ENCODE measurements at regions of chr12 and their contacts with region 1.

Region 1: DNA sequence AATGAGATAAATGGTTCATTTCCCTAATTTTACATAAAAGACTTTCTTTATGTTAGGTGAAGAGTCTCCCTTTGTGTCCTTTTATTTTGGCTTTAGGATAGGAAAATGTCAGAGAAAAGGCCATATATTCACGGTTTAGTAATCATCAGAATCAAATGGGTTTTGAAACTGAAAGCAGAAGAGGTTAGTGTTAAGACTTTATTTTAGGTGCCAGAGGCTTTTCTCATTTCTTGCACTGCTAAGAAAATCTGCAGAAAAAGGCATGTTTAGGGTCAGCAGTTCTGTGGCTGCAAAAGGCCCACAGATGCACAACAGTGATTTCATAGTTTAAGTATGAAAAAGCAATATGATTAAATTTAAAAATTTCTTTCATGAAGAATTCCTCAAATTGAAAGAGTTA is 80.4 kb upstream of the SINHCAF start:
- DNase-seq: no peak
- H3K4me3 Mint-ChIP-seq: no peak overlapping the region
- H3K27ac Mint-ChIP-seq: no peak overlapping the region
- H3K4me1 Mint-ChIP-seq: peaks cover 5% of the 10 kb centered on the region
- H3K27me3 Mint-ChIP-seq: peaks cover 2% of the 10 kb centered on the region

Region 2: DNA sequence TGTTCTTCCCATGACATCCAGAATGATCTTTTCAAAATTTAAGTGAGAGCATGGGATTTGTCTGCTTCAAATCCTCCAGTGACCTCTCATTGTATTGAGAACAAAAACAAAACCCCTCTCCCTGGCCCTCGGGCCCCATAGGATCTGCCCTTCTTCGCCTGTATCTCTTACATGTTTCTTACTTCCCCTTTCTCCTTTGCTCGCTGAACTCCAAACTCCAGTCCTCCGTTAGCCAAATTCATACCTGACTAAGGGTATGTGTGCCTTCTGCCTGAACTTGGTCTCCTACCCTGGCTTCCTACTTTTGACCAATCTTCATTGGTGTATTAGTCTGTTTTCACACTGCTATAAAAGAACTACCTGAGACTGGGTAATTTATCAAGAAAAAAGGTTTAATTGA is 493.0 kb before region 1 on chr12:
- CTCF ChIA-PET with region 1: no interaction called
- POLR2A ChIA-PET with region 1: no interaction called
- DNase-seq: no peak
- H3K4me3 Mint-ChIP-seq: no peak overlapping the region
- H3K27ac Mint-ChIP-seq: no peak overlapping the region
- H3K4me1 Mint-ChIP-seq: no peaks in the 10 kb centered on the region
- H3K27me3 Mint-ChIP-seq: peaks cover 4% of the 10 kb centered on the region

Region 3: DNA sequence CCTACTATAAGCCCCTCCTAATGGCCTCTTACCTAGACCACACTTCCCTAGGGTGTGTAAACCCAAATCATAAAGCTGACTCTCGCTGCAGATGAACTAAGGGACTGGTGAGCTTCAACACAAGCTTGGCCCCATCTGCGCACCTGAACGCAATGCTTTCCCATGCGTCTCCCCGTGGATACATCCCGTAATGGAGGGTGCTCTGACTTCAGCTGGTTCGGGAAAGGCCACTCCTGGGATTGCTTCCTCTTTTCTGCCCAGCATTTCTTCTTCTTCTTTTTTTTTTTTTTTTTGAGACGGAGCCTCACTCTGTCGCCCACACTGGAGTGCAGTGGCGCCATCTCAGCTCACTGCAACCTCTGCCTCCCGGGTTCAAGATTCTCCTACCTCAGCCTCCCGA is 225.4 kb after region 1 on chr12:
- CTCF ChIA-PET with region 1: interaction called, 22 read pairs
- POLR2A ChIA-PET with region 1: no interaction called
- DNase-seq: no peak
- H3K4me3 Mint-ChIP-seq: no peak overlapping the region
- H3K27ac Mint-ChIP-seq: no peak overlapping the region
- H3K4me1 Mint-ChIP-seq: peaks cover 4% of the 10 kb centered on the region
- H3K27me3 Mint-ChIP-seq: peaks cover 1% of the 10 kb centered on the region

Region 4: GRCh38 chr12:31644536-31644935 is 238.2 kb after region 1 on chr12:
- CTCF ChIA-PET with region 1: interaction called, 23 read pairs
- POLR2A ChIA-PET with region 1: no interaction called
- DNase-seq: no peak
- H3K4me3 Mint-ChIP-seq: no peak overlapping the region
- H3K27ac Mint-ChIP-seq: no peak overlapping the region
- H3K4me1 Mint-ChIP-seq: no peaks in the 10 kb centered on the region
- H3K27me3 Mint-ChIP-seq: peaks cover 3% of the 10 kb centered on the region